ENCODE measurements at regions of chr7 and their contacts with region 1.

Region 1: GRCh38 chr7:100705753-100706671 is at the start of gene POP7:
- DNase-seq: peak; percentile 99
- H3K4me3 Mint-ChIP-seq: peak within 1 kb of the TSS; percentile 90
- H3K27ac Mint-ChIP-seq: peak within 1 kb of the TSS; percentile 88
- H3K4me1 Mint-ChIP-seq: peaks cover 14% of the 10 kb centered on the region
- H3K27me3 Mint-ChIP-seq: no peaks in the 10 kb centered on the region
- total RNA-seq, gene POP7: 38.7 to 42.2 TPM

Region 2: GRCh38 chr7:100611974-100612729 is 93.9 kb before region 1 on chr7 and contains the start of gene MOSPD3:
- CTCF ChIA-PET with region 1: interaction called, 13 read pairs
- POLR2A ChIA-PET with region 1: interaction called, 3 read pairs
- intact Hi-C with region 1: no loop called
- DNase-seq: peak; percentile 98
- H3K4me3 Mint-ChIP-seq: peak within 1 kb of the TSS; percentile 90
- H3K27ac Mint-ChIP-seq: peak within 1 kb of the TSS; percentile 98
- H3K4me1 Mint-ChIP-seq: peaks cover 14% of the 10 kb centered on the region
- H3K27me3 Mint-ChIP-seq: no peaks in the 10 kb centered on the region
- total RNA-seq, gene MOSPD3: 14.0 to 14.4 TPM

Region 3: GRCh38 chr7:100673300-100673941 is 32.6 kb before region 1 on chr7 and contains the start of gene GNB2:
- CTCF ChIA-PET with region 1: interaction called, 17 read pairs
- POLR2A ChIA-PET with region 1: interaction called, 6 read pairs
- intact Hi-C with region 1: loop called (anchors 1 kb)
- DNase-seq: peak; percentile 100
- H3K4me3 Mint-ChIP-seq: peak within 1 kb of the TSS; percentile 95
- H3K27ac Mint-ChIP-seq: peak within 1 kb of the TSS; percentile 97
- H3K4me1 Mint-ChIP-seq: peaks cover 8% of the 10 kb centered on the region
- H3K27me3 Mint-ChIP-seq: no peaks in the 10 kb centered on the region
- total RNA-seq, gene GNB2: 228 to 231 TPM

Region 4: DNA sequence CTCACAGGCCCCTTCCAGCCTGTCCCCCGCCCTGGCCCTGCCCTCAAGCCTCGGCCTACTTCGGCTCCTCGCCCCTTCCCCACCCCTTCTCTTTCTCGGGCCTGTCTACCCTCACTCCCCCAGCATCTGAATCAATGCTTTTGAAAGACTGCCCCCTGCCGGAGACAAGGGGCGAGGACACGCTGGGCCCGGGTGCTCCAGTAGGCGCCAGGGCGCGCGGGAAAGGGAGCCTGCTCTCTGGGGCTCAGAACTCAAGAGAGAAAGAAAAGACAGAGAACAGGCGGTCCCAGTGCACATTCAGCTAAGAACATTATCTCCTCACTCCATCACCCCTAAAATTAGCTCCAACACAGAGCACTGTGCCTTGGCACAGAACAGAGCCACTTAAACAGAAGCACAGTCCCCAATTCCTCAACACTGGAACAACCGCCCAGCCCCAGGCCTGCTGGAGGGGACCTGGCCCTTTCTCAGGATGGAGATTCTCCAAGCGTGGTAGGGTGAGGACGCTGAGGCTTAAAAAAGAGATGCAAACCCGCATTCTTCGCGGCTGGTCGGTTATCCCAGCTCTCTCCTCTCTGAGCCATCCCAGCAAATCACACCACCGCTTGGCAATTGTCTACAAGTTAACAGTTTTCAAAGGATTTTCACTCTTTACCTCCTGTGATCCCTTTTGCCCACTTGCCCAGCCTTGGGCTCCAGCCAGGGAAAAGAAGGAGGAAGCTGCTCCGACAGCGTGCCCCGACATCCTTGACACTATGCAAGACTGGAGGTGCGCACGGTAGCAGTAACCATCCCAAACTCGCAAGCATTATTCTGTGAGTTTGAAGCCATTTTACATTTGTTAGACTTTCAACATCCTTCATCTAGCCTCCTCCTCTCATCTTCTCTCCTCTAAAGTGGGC is 14.1 kb before region 1 on chr7:
- CTCF ChIA-PET with region 1: interaction called, 132 read pairs
- POLR2A ChIA-PET with region 1: interaction called, 38 read pairs
- intact Hi-C with region 1: loop called (anchors 1 kb)
- DNase-seq: peak; percentile 88
- H3K4me3 Mint-ChIP-seq: peak overlapping the region; percentile 93
- H3K27ac Mint-ChIP-seq: no peak overlapping the region
- H3K4me1 Mint-ChIP-seq: peaks cover 37% of the 10 kb centered on the region
- H3K27me3 Mint-ChIP-seq: no peaks in the 10 kb centered on the region

Region 5: DNA sequence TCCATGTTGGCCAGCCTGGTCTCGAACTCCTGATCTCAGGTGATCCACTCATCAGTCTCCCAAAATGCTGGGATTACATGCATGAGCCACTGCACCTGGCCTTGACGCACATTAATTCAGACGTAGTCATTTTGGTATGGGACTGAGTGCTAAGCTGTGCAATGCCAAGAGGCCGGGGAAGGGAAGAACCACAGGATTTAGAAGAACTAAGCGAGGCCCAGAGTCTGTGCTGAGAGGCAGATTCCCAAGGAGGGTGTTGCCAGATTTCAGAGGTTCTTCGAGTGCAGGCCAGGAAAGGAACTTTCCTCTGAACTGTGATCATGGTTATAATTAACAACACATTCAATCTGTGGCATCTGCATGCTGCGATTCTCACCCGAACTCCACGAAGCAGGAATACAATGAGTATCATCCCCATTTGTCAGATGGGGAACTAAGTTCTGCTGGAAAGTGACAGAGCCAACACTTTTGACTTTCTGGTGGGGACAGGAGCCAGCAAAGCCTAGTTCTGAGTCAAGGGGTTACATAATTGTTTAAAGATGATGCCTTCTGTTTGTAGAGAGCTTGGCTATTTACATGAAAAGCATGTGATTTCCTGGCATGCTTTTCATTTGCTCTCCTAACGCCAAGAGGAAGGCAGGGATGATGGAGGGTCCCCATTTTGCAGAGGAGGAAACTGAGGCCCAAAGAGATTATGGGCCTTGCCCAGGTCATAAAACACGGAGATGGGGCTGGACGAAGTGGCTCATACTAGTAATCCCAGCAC is 21.2 kb after region 1 on chr7:
- CTCF ChIA-PET with region 1: interaction called, 68 read pairs
- POLR2A ChIA-PET with region 1: no interaction called
- intact Hi-C with region 1: loop called (anchors 2 kb)
- DNase-seq: no peak
- H3K4me3 Mint-ChIP-seq: no peak overlapping the region
- H3K27ac Mint-ChIP-seq: no peak overlapping the region
- H3K4me1 Mint-ChIP-seq: peaks cover 2% of the 10 kb centered on the region
- H3K27me3 Mint-ChIP-seq: peaks cover 16% of the 10 kb centered on the region

Region 6: GRCh38 chr7:100874577-100875355 is 168.8 kb after region 1 on chr7 and contains the start of gene SRRT:
- CTCF ChIA-PET with region 1: interaction called, 3 read pairs
- POLR2A ChIA-PET with region 1: interaction called, 11 read pairs
- intact Hi-C with region 1: loop called (anchors 5 kb)
- DNase-seq: peak; percentile 99
- H3K4me3 Mint-ChIP-seq: peak within 1 kb of the TSS; percentile 99
- H3K27ac Mint-ChIP-seq: peak within 1 kb of the TSS; percentile 100
- H3K4me1 Mint-ChIP-seq: peaks cover 43% of the 10 kb centered on the region
- H3K27me3 Mint-ChIP-seq: no peaks in the 10 kb centered on the region
- total RNA-seq, gene SRRT: 209 to 223 TPM

Measured in activated CD4-positive, alpha-beta memory T cell treated with anti-CD3 and anti-CD28 coated beads for 36 hours (primary cell).